Mammary epithelial cell (primary cell): ENCODE measurements at regions of chr6 and their contacts with region 1.

Region 1: DNA sequence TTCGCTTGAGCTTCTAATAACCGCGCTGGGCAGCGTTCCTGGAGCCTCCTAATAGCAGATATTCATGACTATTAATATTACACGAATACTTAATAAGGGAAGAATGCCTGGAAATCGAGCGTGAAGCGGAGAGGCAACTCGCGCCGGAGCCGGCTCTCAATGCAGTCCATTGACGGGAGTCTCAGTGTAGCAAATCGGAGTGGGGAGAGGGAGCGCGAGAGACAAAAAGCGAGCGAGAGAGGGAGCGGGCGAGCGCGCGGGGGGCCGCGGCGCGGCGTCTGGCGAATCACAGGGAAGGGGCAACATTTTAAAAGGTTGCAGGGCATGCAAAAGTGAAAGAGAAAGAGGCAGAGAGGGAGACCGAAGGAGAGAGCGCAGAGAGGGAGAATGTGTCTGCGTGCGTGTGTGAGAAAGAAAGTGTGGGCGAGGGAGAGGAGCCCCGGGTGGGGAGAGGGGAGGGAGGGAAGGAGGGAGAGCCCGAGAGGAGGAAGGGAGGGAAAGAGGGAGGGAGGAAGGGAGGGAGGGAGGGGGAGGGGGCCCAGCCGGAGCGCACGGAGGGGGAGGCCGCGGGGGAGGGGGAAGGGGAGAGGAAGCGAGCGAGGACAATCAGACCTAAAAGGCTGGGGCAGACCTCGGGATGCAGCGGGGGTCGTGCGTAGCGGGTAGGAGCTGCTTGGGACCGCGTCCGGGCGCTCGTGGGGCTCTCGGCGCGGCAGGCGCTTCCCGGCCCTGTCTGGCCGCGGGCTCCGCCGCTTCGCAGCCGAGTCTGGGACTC is 2.7 kb downstream of the TFAP2A start:
- DNase-seq: peak; percentile 92
- H3K4me3 ChIP-seq: peak overlapping the region; percentile 84 to 97 (median 96)
- H3K27ac ChIP-seq: peak overlapping the region; percentile 99
- H3K4me1 ChIP-seq: peaks cover 16% of the 10 kb centered on the region
- H3K27me3 ChIP-seq: no peaks in the 10 kb centered on the region
- CTCF ChIP-seq: no peak

Region 2: DNA sequence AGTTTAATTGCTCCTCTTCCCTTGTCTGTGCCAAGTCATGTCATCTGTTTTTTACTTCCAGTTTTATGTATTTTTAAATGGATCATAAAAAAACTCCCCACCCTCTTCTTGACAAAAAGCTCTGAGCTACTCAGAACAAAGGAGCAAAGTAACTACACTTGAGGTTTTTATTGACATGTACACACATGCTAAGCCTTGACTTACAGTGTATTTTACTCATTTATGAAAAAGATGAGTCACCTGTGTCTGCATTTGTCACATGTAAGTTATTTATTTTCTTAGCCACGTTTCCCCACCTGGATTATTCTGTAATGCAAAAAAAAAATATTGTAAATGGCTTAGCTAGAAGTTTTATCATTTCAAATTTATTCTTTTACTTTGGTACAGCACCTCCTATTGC is 1348.0 kb before region 1 on chr6:
- CTCF ChIA-PET with region 1: no interaction called
- dilution Hi-C with region 1: no loop called
- in situ Hi-C with region 1: no loop called
- intact Hi-C with region 1: loop called (anchors 10 kb)
- DNase-seq: peak; percentile 91
- H3K4me3 ChIP-seq: no peak overlapping the region
- H3K27ac ChIP-seq: peak overlapping the region; percentile 19
- H3K4me1 ChIP-seq: peaks cover 6% of the 10 kb centered on the region
- H3K27me3 ChIP-seq: no peaks in the 10 kb centered on the region
- CTCF ChIP-seq: no peak

Region 3: DNA sequence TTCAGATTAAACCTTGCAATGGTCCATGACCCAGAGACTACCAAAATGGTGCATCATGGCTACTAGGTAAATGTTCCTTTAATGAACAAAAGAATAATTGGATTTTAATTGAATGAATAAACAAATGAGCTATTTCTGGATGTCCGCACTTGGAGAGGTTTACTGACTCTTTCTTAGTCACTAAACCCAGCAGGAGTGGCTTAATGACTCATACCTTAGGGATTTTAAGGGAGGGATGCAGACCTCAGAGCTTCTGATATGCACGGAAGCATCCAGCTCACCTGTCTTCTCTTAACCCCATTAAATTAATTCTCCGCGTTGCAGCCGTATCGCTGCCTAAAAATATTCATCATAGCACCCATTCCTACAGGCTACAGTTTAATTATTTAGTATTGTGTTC is 1006.8 kb before region 1 on chr6:
- CTCF ChIA-PET with region 1: no interaction called
- dilution Hi-C with region 1: no loop called
- in situ Hi-C with region 1: no loop called
- intact Hi-C with region 1: loop called (anchors 5 kb)
- DNase-seq: peak; percentile 85
- H3K4me3 ChIP-seq: no peak overlapping the region
- H3K27ac ChIP-seq: peak overlapping the region; percentile 48
- H3K4me1 ChIP-seq: peaks cover 17% of the 10 kb centered on the region
- H3K27me3 ChIP-seq: no peaks in the 10 kb centered on the region
- CTCF ChIP-seq: no peak

Region 4: DNA sequence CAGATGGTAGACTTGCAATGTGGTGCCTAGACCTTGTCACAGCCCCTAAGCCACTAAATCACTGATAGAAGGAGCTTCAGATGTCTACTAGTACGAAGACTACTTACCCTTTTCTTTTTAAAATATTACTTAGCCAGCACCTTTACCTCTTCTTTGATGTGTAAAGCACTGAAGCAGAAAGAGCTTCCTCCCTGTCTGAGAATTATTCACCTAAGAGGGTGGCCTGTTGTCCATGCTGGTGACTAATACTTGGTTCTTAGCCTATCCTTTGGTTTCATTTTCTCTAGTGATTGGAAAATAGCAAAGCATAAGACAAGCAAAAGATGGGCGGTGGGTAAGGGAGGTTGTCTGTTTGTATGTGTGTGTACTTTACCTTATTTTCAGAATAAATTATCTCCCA is 791.9 kb before region 1 on chr6:
- CTCF ChIA-PET with region 1: no interaction called
- dilution Hi-C with region 1: no loop called
- in situ Hi-C with region 1: no loop called
- intact Hi-C with region 1: loop called (anchors 10 kb)
- DNase-seq: peak; percentile 57
- H3K4me3 ChIP-seq: no peak overlapping the region
- H3K27ac ChIP-seq: no peak overlapping the region
- H3K4me1 ChIP-seq: peaks cover 3% of the 10 kb centered on the region
- H3K27me3 ChIP-seq: no peaks in the 10 kb centered on the region
- CTCF ChIP-seq: no peak

Region 5: GRCh38 chr6:10082385-10082784 is 329.8 kb before region 1 on chr6:
- CTCF ChIA-PET with region 1: interaction called, 10 read pairs
- dilution Hi-C with region 1: no loop called
- in situ Hi-C with region 1: loop called (anchors 10 kb)
- intact Hi-C with region 1: loop called (anchors 1 kb)
- DNase-seq: peak; percentile 71
- H3K4me3 ChIP-seq: no peak overlapping the region
- H3K27ac ChIP-seq: no peak overlapping the region
- H3K4me1 ChIP-seq: peaks cover 37% of the 10 kb centered on the region
- H3K27me3 ChIP-seq: no peaks in the 10 kb centered on the region
- CTCF ChIP-seq: no peak

Region 6: GRCh38 chr6:10316327-10316726 is 95.8 kb before region 1 on chr6:
- CTCF ChIA-PET with region 1: no interaction called
- dilution Hi-C with region 1: no loop called
- in situ Hi-C with region 1: no loop called
- intact Hi-C with region 1: loop called (anchors 1 kb)
- DNase-seq: peak; percentile 95
- H3K4me3 ChIP-seq: peak overlapping the region in 1 of 3 experiments; percentile 26
- H3K27ac ChIP-seq: peak overlapping the region; percentile 57
- H3K4me1 ChIP-seq: peaks cover 13% of the 10 kb centered on the region
- H3K27me3 ChIP-seq: no peaks in the 10 kb centered on the region
- CTCF ChIP-seq: no peak

Region 7: GRCh38 chr6:10465629-10466504 is 53.7 kb after region 1 on chr6:
- CTCF ChIA-PET with region 1: no interaction called
- dilution Hi-C with region 1: no loop called
- in situ Hi-C with region 1: no loop called
- intact Hi-C with region 1: loop called (anchors 1 kb)
- DNase-seq: peak; percentile 36
- H3K4me3 ChIP-seq: no peak overlapping the region
- H3K27ac ChIP-seq: no peak overlapping the region
- H3K4me1 ChIP-seq: no peaks in the 10 kb centered on the region
- H3K27me3 ChIP-seq: no peaks in the 10 kb centered on the region
- CTCF ChIP-seq: peak; percentile 48 to 73